ENCODE measurements at regions of chr7 and their contacts with region 1.

Region 1: DNA sequence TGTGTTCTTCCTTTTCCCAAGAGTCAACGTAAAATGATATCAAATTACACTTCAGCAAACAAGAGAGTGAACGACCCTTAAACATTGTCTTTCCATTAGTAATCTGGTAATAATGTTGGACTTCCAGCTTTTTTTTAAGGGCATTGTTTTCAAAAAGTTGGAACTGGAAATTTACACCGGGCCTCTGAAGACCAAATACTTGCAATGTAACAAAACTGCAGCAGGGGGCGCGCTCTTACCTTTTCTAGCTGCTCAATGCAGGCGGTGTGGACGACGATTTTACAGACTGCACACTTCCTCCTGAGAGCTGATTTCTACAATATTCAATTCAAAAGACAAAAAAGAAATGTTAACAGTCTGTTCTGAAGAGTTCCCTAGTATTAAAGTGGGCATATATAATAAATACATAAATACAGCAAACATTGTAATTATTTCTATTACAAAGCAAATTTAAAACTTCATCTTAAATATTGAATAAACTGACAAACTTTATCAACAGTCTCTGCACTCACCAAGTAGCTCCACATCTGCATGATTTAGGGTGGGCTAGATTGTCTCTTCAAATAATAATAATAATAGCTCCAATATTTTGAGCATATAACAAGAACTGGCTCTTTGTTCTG is 190.4 kb downstream of the DGKI start:
- DNase-seq: peak; percentile 77
- H3K4me3 ChIP-seq: no peak overlapping the region
- H3K27ac ChIP-seq: peak overlapping the region; percentile 1
- H3K4me1 ChIP-seq: peaks cover 25% of the 10 kb centered on the region
- H3K27me3 ChIP-seq: no peaks in the 10 kb centered on the region
- CTCF ChIP-seq: peak; percentile 89

Region 2: DNA sequence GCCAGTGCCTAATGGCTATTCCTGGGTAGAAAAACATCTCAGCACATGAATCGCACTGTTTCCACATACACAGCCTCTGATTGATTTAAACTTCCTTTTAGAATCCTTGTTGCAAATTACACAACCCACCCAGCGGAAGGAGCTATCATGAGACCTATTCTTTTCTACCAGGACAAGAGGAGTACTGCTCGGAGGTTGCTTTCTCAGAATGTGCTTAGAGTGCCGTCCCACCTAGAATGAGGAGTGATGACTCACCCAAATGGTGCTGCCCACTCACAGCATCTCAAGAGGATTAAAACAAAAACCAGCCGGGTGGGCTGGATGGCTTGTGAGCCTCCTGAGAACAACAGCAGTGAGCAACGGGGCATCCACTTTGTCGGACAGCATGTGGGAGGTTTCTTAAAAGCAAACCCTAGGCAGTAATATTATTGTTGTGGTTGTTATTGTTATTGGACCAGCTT is 61.5 kb after region 1 on chr7:
- intact Hi-C with region 1: no loop called
- DNase-seq: no peak
- H3K4me3 ChIP-seq: no peak overlapping the region
- H3K27ac ChIP-seq: peak overlapping the region; percentile 50
- H3K4me1 ChIP-seq: peaks cover 14% of the 10 kb centered on the region
- H3K27me3 ChIP-seq: no peaks in the 10 kb centered on the region
- CTCF ChIP-seq: no peak

Region 3: DNA sequence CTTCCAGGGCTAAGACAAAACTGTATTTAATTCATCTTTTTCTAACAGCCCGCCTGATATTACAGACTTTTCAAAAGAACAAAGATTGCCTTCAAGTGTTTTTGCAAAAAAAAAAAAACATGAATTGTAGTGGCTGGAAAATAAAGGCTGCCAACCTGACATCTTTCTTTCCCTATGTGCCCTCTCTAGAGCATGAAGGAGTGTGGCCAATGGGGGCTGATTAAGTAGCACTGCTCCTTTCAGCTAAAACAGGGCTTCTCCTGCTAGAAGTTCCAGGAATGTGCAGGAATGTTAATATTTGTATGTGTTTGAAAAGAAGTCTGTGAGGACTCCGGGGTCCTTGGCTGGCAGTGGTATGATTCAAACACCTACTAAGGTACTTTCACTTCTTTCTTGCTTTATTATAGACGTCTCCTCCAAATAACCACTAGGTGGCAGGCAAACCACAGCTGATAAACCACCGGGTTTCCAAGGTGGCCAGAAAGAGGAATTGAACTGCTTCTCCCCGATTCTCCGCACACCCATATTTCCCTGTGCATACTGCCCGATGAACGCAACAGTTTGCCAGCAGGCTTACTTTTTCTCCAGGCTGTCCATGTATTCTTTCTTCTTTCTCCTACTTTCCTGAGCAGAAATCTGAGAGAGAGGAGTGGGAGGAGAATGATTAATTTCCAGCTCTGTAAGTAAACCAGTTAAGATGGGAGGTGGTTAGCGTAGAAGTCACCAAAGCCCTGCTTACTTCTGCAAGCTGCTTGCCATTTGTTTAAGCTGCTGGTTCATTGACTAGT is 247.2 kb after region 1 on chr7:
- intact Hi-C with region 1: loop called (anchors 5 kb)
- DNase-seq: no peak
- H3K4me3 ChIP-seq: no peak overlapping the region
- H3K27ac ChIP-seq: peak overlapping the region; percentile 39
- H3K4me1 ChIP-seq: peaks cover 45% of the 10 kb centered on the region
- H3K27me3 ChIP-seq: no peaks in the 10 kb centered on the region
- CTCF ChIP-seq: peak; percentile 87

Region 4: GRCh38 chr7:138008547-138009349 is 352.4 kb after region 1 on chr7:
- intact Hi-C with region 1: loop called (anchors 5 kb)
- DNase-seq: no peak
- H3K4me3 ChIP-seq: no peak overlapping the region
- H3K27ac ChIP-seq: no peak overlapping the region
- H3K4me1 ChIP-seq: peaks cover 4% of the 10 kb centered on the region
- H3K27me3 ChIP-seq: no peaks in the 10 kb centered on the region
- CTCF ChIP-seq: peak; percentile 96

Region 5: GRCh38 chr7:139071680-139072079 is 1415.3 kb after region 1 on chr7:
- intact Hi-C with region 1: no loop called
- DNase-seq: no peak
- H3K4me3 ChIP-seq: no peak overlapping the region
- H3K27ac ChIP-seq: no peak overlapping the region
- H3K4me1 ChIP-seq: peaks cover 11% of the 10 kb centered on the region
- H3K27me3 ChIP-seq: no peaks in the 10 kb centered on the region
- CTCF ChIP-seq: no peak

Measured in left ventricle myocardium inferior (tissue), 1 donor.